ENCODE measurements at regions of chr5 and their contacts with region 1.

Region 1: GRCh38 chr5:179858586-179859427 is at the start of gene MRNIP:
- DNase-seq: peak; percentile 98
- H3K4me3 ChIP-seq: peak within 1 kb of the TSS; percentile 91 to 97 (median 92)
- H3K27ac ChIP-seq: peak within 1 kb of the TSS; percentile 87 to 95 (median 94)
- H3K4me1 ChIP-seq: peaks cover 11 to 38% (median 31%) of the 10 kb centered on the region in 4 donors
- H3K27me3 ChIP-seq: no peaks in the 10 kb centered on the region
- CTCF ChIP-seq: peak in 2 of 3 experiments; percentile 40 to 49
- EP300 ChIP-seq: no peak
- POLR2A ChIP-seq: no peak
- total RNA-seq, gene MRNIP: 21.2 to 34.2 (median 23.3) TPM

Region 2: DNA sequence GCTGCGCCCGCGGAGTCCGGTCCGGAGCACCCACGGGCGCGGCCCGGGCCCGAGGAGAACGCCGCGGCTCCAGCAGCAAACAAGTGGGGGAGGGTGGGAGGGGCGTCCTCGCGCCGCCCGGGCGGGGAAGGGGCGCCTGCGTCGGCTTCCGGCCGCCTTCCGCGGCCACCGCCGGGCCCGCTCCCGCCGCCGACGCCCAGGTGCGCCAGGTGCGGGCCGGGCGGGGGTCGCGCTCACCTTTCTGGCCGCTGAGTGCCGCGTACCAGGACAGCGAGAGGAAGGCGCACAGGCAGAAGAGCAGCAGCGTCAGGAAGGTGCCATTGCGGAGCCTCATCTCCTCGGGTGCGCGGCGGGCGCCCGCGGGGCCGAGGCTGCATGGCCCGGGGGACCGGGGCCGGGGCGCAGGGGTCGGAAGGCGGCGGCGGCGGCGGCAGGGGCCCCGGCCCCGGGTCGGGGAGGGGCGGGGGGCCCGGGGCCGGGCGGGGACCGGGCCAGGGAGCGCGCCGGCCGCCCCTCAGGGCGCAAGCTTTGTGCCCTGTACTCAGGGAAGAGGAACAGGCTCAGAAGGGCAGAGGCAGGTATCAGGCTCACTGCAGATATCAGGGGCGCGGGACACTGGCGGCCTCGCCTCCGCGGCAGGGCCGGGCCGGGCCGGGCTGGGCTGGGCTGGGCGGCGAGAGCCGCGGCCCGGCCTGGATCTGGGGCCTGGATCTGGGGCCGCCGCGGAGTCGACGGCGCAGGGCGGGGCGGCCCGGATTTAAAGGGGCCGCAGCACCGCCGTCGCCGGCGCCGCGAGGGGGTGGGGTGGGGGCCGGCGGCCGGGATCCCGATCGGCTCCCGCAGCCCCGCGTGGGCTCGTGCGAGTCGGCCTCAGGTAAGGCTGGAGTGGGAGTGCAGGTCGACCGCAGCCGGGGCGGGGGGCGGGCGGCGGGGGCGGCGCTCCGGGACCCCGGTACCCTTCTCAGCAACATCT is 52.3 kb before region 1 on chr5 and contains the start of gene MGAT4B:
- intact Hi-C with region 1: loop called (anchors 5 kb)
- DNase-seq: no peak
- H3K4me3 ChIP-seq: peak within 1 kb of the TSS; percentile 76 to 99 (median 94)
- H3K27ac ChIP-seq: peak within 1 kb of the TSS; percentile 92 to 99 (median 98)
- H3K4me1 ChIP-seq: peaks cover 44 to 53% (median 52%) of the 10 kb centered on the region in 4 donors
- H3K27me3 ChIP-seq: no peaks in the 10 kb centered on the region
- CTCF ChIP-seq: no peak
- EP300 ChIP-seq: no peak
- POLR2A ChIP-seq: no peak
- total RNA-seq, gene MGAT4B: 47.1 to 70.6 (median 59.2) TPM

Region 3: GRCh38 chr5:179821581-179822432 is 37.0 kb before region 1 on chr5:
- intact Hi-C with region 1: loop called (anchors 5 kb)
- DNase-seq: peak; percentile 98
- H3K4me3 ChIP-seq: peak overlapping the region; percentile 93 to 100 (median 96)
- H3K27ac ChIP-seq: peak overlapping the region; percentile 99 to 100 (median 100)
- H3K4me1 ChIP-seq: peaks cover 67 to 89% (median 88%) of the 10 kb centered on the region in 4 donors
- H3K27me3 ChIP-seq: no peaks in the 10 kb centered on the region
- CTCF ChIP-seq: no peak
- EP300 ChIP-seq: no peak
- POLR2A ChIP-seq: peak; percentile 42

Measured in esophagus muscularis mucosa (tissue), 4 donors.